ENCODE measurements at regions of chr5 and their contacts with region 1.

Region 1: DNA sequence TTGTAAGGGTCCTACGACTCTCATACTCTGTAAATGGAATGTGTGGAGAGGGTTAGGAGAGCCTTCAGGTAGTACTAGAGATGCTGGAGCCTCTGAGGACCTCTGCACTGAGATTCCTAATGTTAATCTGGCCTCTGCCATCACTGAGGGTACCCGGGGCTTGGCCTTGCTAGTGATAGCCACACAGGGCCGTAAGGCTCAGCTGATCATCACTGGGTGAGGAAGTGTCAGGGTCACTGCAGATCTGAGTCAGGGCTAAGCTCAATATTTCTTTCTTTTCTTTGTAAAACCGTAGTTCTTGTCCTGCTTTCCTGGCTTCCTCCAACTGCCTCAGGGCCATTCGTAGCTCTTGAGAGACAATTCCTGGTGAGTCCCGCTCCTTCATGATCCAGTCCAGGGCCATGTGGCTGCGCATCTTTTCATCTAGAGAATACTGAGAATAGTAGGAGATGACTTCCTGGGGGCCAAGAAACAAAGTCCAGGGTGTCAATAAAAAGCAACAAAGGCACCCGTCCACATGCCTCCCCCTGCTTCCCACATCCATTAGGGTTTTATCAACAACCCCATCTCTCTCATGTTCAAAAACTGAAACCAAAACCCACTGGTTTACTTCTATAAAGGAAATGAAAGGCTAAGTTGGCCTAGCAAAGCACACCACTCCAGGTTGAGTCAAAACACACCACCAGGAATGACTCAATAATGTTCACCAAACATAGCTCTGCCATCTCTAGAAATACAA is 47.7 kb downstream of the LIX1 start:
- DNase-seq: peak; percentile 41
- H3K4me3 Mint-ChIP-seq: no peak overlapping the region
- H3K27ac Mint-ChIP-seq: peak overlapping the region; percentile 56
- H3K4me1 Mint-ChIP-seq: peaks cover 22% of the 10 kb centered on the region
- H3K27me3 Mint-ChIP-seq: peaks cover 37% of the 10 kb centered on the region

Region 2: DNA sequence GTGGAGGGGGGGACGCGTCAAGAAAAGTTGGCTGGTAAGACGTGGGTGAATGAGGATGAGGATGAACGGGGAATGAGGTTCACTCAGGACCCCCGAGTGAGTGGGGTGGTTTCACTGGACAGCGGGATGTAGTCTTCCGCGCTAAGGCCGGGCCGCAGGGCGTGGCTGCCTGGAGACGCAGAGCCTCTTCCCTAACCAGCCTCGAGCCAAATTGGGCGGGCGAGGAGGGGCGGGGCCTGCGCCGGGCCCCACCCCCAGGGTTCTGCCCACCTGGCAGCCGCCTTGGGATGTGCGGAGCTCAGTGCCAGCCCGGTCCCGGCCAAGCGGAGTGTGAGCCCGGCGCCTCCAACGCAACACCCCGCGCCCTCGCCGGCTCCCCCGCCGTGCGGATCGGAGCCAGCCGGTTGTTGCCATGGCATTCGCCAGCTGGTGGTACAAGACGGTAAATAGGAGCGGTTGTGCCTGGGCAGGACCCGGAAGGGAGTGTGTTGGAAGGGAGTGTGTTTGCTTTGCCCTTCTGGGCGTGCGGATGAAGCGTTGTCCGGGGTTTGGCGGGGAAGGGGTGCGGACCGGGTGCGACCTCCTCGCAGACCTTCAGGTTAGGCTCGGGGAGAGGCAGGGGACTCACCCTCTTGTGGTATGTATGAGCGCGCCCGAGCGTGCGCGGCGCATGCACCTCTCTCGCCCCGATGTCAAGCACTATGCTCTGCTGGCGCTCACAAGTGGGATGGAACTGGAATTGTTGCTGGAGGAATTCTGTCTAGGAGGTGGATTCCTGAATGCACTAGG is 431.8 kb before region 1 on chr5:
- intact Hi-C with region 1: loop called (anchors 2 kb)
- DNase-seq: peak; percentile 82
- H3K4me3 Mint-ChIP-seq: peak overlapping the region; percentile 90
- H3K27ac Mint-ChIP-seq: peak overlapping the region; percentile 96
- H3K4me1 Mint-ChIP-seq: peaks cover 55% of the 10 kb centered on the region
- H3K27me3 Mint-ChIP-seq: peaks cover 26% of the 10 kb centered on the region

Region 3: DNA sequence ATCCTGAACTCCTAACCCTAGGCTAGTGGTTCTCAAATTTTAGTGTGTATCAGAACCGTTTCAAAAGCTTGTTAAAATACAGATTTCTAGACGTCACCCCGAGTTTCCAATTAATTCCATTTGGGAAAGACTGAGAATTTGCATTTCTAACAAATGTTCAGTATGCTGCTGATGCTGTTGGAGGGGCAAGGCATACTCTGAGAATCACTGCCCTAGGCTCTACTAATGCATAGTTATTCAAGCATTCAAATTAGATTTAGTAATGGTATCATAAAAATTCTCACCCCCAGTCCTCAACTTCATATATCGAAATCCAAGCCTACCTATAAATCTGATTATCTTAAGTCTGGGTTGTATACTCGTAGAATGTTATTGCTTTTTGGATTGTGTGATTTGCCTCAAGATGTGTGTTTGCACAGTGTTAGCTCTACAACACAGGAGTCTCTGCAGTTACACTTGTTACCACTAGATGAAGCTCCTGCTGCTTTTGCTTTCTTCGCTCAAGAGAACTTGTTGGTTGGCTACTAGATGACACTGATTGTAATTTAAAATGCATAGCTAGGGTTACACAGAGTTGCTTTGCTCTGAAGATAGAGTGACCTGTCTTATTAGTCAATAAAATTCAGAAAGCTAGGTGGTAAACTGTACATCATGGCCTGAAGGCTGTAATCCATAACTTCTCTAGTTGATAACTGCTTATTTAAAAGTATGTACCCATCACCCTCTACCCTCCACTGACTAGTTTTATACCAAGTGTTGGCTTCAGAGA is 226.0 kb before region 1 on chr5:
- intact Hi-C with region 1: loop called (anchors 1 kb)
- DNase-seq: no peak
- H3K4me3 Mint-ChIP-seq: no peak overlapping the region
- H3K27ac Mint-ChIP-seq: no peak overlapping the region
- H3K4me1 Mint-ChIP-seq: peaks cover 54% of the 10 kb centered on the region
- H3K27me3 Mint-ChIP-seq: no peaks in the 10 kb centered on the region

Region 4: GRCh38 chr5:96957254-96958049 is 137.3 kb before region 1 on chr5:
- intact Hi-C with region 1: loop called (anchors 2 kb)
- DNase-seq: no peak
- H3K4me3 Mint-ChIP-seq: peak overlapping the region; percentile 31
- H3K27ac Mint-ChIP-seq: peak overlapping the region; percentile 82
- H3K4me1 Mint-ChIP-seq: peaks cover 63% of the 10 kb centered on the region
- H3K27me3 Mint-ChIP-seq: no peaks in the 10 kb centered on the region

Region 5: DNA sequence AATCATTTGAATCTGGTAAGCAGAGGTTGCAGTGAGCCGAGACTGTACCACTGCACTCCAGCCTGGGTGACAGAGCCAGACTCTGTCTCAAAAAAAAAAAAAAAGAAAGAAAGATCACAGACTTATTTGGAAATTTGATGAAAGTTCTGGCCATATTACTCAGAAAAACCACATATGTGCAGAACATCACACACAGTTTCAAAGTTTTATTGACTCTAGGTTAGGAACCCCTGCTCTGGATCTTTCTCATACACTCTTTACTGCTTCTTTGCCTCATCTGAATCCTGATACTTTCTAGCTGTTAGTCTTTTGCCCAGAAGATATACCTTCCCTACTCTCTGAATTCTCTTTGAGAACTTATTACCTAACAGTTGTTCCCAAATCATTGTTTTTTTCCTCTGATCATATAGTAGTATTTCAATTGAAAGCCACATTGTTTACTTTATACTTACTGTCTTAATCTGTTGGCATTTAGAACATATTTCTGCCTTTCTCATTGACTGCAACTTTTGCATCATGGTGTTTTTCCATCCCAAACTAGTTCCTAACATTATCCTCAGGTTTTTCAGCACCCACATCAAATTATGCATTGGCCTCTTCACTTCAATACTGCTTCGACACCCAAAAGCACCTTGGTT is 90.2 kb before region 1 on chr5:
- intact Hi-C with region 1: loop called (anchors 1 kb)
- DNase-seq: no peak
- H3K4me3 Mint-ChIP-seq: peak overlapping the region; percentile 18
- H3K27ac Mint-ChIP-seq: peak overlapping the region; percentile 73
- H3K4me1 Mint-ChIP-seq: peaks cover 29% of the 10 kb centered on the region
- H3K27me3 Mint-ChIP-seq: no peaks in the 10 kb centered on the region

Region 6: DNA sequence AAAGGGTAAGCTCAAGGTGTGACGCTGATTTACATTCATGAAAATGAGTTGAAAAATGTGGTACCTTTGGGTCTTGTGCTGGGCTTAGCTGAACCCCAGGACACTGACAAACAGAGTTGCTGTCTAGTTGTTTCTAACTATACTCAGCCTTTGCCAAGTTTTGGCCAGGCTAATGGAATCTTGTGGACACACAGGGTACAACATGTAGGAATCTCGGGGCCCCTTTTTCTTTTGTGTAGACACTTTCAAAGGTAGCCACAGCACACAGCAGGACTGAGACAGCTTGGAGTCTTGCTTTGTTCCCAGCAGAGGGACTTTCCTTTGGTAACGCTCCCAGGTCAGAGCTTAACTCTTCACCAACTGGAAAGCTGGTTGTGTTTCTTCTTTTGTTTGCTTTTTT is 39.9 kb after region 1 on chr5:
- intact Hi-C with region 1: loop called (anchors 2 kb)
- DNase-seq: no peak
- H3K4me3 Mint-ChIP-seq: no peak overlapping the region
- H3K27ac Mint-ChIP-seq: no peak overlapping the region
- H3K4me1 Mint-ChIP-seq: peaks cover 21% of the 10 kb centered on the region
- H3K27me3 Mint-ChIP-seq: peaks cover 13% of the 10 kb centered on the region

Region 7: DNA sequence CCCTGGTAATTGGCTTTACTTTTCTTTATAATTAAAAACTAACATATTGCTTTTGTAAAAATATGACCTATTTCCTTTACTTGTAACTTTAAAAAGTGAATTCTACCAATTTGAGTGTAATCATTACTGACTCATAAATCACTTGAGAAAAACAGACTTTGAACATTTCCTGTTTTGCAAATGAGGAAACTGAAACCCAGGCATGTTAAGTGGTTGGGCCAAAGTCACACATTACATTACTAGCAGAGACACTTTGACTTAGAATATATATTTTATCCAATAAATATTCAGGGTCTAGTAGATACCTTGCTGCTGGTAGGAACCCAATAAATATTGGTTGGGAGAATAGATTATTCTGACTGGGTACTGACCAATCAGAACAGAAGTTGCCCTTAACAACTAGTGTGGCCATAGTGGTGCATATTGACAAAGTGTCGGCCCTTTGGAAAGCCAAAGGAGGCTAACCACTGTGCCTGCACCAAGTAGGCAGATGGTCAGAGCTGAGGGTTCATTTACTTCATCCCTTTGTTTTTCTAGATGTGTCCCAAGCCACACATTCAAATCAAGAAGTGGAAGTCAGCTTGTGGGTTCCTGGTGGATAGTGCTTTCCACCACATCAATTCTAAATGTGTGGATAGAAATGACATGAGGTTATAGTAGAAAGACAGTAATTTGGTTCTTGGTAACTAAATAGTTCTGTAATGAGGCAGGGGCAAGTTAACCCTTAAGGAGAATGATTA is 453.4 kb after region 1 on chr5:
- intact Hi-C with region 1: loop called (anchors 1 kb)
- DNase-seq: no peak
- H3K4me3 Mint-ChIP-seq: no peak overlapping the region
- H3K27ac Mint-ChIP-seq: peak overlapping the region; percentile 24
- H3K4me1 Mint-ChIP-seq: peaks cover 27% of the 10 kb centered on the region
- H3K27me3 Mint-ChIP-seq: peaks cover 1% of the 10 kb centered on the region

Measured in activated T-helper 2 cell treated with anti-CD3 and anti-CD28 coated beads, Interferon-gamma antibody, Interleukin-2, Interleukin-4, amounts not matched to agents 10 μg/mL and 5 μg/mL and 100 μg/mL, durations not matched to agents 14 hours and 24 hours and 36 hours (primary cell).